AG04449 (cell line): ENCODE measurements at regions of chr11 and their contacts with region 1.

Region 1: DNA sequence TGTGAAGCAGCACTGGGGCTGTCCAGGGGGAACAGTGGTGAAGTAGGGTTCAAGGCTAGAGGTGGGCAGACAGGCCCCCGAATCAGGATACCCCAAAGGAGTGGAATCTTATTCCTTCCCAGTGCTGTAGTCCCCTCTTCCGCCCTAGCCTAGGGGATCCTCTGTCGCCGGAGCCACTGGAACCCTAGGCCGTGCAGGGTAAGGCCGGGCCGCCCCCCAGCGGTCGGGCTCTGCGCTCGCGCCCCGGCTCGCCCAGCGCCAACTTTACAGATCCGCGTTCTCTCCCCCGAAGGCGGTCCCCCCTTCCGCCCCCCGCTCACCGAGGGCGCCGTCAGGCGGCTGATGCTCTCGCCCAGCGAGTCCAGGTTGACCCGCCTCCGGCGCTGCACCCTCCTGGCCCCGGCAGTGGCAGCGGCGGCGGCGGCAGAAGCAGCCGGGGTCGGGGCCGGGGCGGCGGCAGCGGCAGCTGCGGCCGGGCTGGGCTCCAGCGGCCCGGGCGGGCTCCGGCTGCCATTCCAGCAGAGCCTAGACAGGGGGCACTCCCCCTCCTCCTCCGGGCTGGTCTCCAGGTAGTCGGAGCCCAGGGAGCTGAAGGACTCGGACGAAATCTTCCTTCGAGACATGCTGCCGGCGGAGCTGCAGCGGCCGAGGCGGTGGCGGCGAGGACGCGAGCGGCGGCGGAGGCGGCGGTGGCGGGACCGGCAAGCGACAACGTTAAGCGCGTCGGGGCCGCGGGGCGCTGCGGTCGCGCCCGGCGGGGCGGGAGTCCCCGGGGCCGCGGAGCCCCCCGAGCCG is 646 bp downstream of the GUCY1A2 start:
- DNase-seq: no peak
- H3K4me3 ChIP-seq: peak overlapping the region; percentile 61
- CTCF ChIP-seq: peak; percentile 77

Region 2: GRCh38 chr11:106724293-106724892 is 293.2 kb before region 1 on chr11:
- CTCF ChIA-PET with region 1: interaction called, 22 read pairs
- POLR2A ChIA-PET with region 1: no interaction called
- DNase-seq: no peak
- H3K4me3 ChIP-seq: no peak overlapping the region
- CTCF ChIP-seq: no peak